Spleen (tissue), 13 donors: ENCODE measurements at regions of chr2 and their contacts with region 1.

Region 1: GRCh38 chr2:85797921-85798320 is 44.1 kb downstream of the ATOH8 start:
- DNase-seq: no peak
- H3K4me3 ChIP-seq: no peak overlapping the region
- H3K27ac ChIP-seq: no peak overlapping the region
- H3K4me1 ChIP-seq: peaks cover 0 to 49% (median 28%) of the 10 kb centered on the region in 6 donors
- H3K27me3 ChIP-seq: peaks cover 0 to 22% (median 0%) of the 10 kb centered on the region in 7 donors
- CTCF ChIP-seq: peak in 9 of 11 experiments; percentile 20 to 65 (median 54)
- POLR2A ChIP-seq: no peak

Region 2: DNA sequence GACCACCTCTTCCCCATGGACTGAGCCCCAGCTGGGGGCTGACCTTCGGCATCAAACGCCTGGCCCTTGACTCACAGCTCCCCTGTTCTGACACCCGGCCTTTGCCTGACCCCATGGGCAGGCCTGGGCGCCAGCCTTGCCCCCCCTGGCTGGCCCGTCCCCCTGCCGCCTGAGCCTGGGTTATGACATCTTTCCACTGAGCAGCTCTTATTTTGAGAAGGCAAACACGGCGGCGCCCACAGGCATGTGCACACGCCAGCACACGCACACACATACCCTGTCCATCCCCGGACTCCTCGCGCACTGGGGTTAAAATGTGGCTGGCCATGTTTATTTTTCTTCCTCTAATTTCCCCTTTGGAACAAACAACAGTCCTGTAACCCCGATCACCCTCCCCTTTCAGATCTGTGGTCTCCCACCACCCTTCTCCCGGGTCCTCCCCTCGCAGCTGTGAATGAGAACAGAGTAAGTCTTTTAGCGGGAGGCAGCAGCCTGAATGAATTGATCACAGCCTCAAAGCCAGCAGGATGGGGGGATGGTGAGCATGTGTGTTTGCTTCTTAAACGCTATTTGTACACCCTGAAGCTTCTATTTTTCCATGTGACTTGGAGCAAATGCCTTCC is 56.0 kb before region 1 on chr2:
- intact Hi-C with region 1: loop called (anchors 10 kb)
- DNase-seq: no peak
- H3K4me3 ChIP-seq: no peak overlapping the region
- H3K27ac ChIP-seq: peak overlapping the region in 7 of 8 donors; percentile 29 to 80 (median 73)
- H3K4me1 ChIP-seq: peaks cover 5 to 51% (median 21%) of the 10 kb centered on the region in 6 donors
- H3K27me3 ChIP-seq: peaks cover 0 to 42% (median 0%) of the 10 kb centered on the region in 7 donors
- CTCF ChIP-seq: no peak
- POLR2A ChIP-seq: no peak